Activated B cell treated with CpG ODN at 0.5 μM for 24 hours (primary cell): ENCODE measurements at regions of chr2 and their contacts with region 1.

Region 1: DNA sequence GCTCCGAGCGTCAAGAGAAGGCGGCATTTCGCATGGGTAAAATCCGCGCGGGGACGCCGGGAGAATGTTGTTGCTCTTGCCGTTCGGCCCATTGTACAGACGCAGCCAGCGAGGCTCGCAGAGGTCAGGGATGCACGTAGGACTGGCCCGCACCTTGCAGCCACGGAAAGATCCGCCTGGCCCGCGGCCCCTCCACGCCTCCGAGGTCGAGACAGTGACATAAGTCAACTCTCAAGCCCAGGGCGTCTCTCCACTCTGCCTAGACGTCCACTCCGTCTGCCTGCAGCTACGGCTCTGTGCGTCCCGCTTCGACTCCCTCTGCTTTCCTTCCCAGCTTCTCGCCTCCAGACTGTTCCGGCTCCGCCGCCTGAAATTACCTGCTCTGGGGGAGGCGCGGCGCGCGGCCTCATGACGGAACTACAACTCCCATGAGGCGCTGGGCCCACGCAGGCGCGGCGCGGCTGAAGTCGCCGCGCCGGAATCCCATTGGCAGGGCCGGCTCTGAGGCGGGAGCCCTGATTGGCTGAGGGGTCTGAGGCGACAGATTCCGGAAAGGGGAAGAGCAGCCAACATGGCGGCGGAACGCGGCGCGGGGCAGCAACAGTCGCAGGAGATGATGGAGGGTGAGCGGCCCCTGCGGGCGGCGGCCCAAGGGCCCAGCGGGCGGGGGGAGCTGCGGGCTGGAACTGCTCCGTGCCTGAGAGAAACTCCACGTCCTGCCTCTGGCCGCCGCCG is at the start of gene PPP1R7:
- DNase-seq: peak; percentile 84
- ATAC-seq: peak; percentile 83
- H3K4me3 Mint-ChIP-seq: peak within 1 kb of the TSS; percentile 100
- H3K27ac Mint-ChIP-seq: peak within 1 kb of the TSS; percentile 95
- H3K4me1 Mint-ChIP-seq: peaks cover 26% of the 10 kb centered on the region
- H3K27me3 Mint-ChIP-seq: no peaks in the 10 kb centered on the region
- CTCF ChIP-seq: no peak
- total RNA-seq, gene PPP1R7: 72.0 and 74.5 TPM in 2 replicates

Region 2: DNA sequence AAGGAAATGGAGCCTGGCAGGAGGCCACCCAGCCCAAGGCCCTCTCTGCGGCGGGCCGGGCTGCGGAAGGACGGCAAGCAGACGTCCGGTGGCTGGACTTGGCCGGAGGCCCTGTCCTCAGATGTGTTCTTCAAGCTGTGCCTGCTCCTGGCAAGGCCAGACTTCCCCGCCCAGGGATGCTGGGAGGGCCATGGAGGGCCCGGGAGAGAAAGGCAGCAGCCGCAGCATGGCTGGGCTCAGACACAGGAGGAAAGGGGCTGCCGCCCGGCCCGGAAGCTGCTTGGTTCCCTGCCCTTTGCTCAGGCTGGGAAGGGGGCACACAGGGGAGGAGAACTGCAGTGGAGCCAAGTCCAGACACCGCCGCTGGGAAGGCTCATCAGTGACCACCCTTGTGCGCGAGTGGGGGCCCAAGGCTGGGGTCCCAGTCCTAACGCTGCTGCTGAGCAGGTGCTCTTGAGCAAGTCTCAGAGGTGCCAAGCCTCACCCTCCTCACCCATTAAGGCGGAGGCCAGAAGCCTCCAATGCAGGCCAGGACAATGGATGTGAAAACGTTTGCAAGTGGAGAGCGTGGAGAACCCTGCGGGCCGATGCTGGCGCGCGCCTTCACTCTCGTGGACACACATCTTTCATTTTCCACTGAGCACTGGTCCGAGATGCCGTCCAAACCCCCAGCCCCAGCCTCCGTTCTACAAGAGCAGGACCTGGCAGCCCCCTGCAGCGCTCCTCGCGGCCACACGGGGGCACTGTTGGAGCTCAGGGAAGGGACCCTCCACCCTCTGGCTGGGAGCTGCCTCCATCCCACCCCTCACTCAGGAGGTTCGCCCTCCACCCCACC is 236.1 kb before region 1 on chr2:
- CTCF ChIA-PET with region 1: interaction called, 5 read pairs
- POLR2A ChIA-PET with region 1: interaction called, 3 read pairs
- intact Hi-C with region 1: loop called (anchors 1 kb)
- DNase-seq: peak; percentile 66
- ATAC-seq: peak; percentile 71
- H3K4me3 Mint-ChIP-seq: no peak overlapping the region
- H3K27ac Mint-ChIP-seq: no peak overlapping the region
- H3K4me1 Mint-ChIP-seq: peaks cover 11% of the 10 kb centered on the region
- H3K27me3 Mint-ChIP-seq: peaks cover 24% of the 10 kb centered on the region
- CTCF ChIP-seq: peak; percentile 15

Region 3: DNA sequence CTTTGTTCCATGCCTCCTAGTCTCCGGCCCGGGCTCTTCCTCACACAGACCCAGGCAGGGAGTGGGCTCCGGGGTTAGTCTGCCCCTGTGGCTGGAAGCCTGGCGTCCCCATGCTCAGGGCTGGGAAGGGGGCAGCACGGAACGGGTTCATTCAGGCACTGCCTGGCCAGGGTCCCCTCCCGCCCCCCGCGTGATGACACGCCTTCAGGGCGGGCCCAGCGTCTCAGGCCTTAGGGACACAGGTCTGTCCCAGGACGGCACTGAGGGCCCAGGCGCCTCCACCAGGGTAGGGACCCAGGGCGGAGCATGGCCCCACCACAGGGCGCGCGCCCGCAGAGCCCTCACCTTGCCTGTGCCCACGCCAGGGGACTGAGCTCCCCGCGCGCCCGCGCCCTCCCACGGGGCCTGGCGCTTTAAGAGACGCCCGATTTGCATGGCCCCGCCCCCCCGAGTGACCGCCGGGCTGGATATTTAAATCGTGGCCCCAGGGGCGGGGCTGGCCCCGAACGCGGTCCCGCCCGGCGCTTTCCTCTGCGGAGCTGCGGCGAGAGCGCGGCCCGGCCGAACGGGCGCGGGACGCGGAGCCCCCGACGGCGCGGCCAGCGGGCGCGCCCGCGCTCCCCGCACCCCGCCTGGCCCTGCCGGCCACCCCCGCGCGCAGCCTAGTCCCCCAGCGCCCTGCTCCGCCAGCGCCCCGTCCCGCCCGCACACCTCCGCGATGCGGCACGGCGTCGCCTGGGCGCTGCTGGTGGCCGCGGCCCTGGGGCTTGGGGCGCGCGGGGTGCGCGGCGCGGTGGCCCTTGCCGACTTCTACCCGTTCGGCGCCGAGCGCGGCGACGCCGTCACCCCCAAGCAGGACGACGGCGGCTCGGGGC is 151.7 kb before region 1 on chr2 and contains the start of gene SNED1:
- CTCF ChIA-PET with region 1: no interaction called
- POLR2A ChIA-PET with region 1: no interaction called
- intact Hi-C with region 1: loop called (anchors 5 kb)
- DNase-seq: peak; percentile 67
- ATAC-seq: peak; percentile 89
- H3K4me3 Mint-ChIP-seq: peak within 1 kb of the TSS; percentile 2
- H3K27ac Mint-ChIP-seq: no peak within 1 kb of the TSS
- H3K4me1 Mint-ChIP-seq: no peaks in the 10 kb centered on the region
- H3K27me3 Mint-ChIP-seq: peaks cover 23% of the 10 kb centered on the region
- CTCF ChIP-seq: no peak
- total RNA-seq, gene SNED1: 44.7 and 59.8 TPM in 2 replicates

Region 4: GRCh38 chr2:241102239-241102803 is 47.8 kb before region 1 on chr2 and contains the start of gene MTERF4:
- CTCF ChIA-PET with region 1: interaction called, 7 read pairs
- POLR2A ChIA-PET with region 1: interaction called, 137 read pairs
- intact Hi-C with region 1: loop called (anchors 1 kb)
- DNase-seq: peak; percentile 85
- ATAC-seq: peak; percentile 92
- H3K4me3 Mint-ChIP-seq: peak within 1 kb of the TSS; percentile 97
- H3K27ac Mint-ChIP-seq: peak within 1 kb of the TSS; percentile 98
- H3K4me1 Mint-ChIP-seq: peaks cover 55% of the 10 kb centered on the region
- H3K27me3 Mint-ChIP-seq: no peaks in the 10 kb centered on the region
- CTCF ChIP-seq: no peak
- total RNA-seq, gene MTERF4: 99.7 and 122 TPM in 2 replicates

Region 5: GRCh38 chr2:241123816-241124536 is 26.1 kb before region 1 on chr2:
- CTCF ChIA-PET with region 1: no interaction called
- POLR2A ChIA-PET with region 1: interaction called, 27 read pairs
- intact Hi-C with region 1: loop called (anchors 1 kb)
- DNase-seq: no peak
- ATAC-seq: no peak
- H3K4me3 Mint-ChIP-seq: no peak overlapping the region
- H3K27ac Mint-ChIP-seq: peak overlapping the region; percentile 69
- H3K4me1 Mint-ChIP-seq: peaks cover 46% of the 10 kb centered on the region
- H3K27me3 Mint-ChIP-seq: no peaks in the 10 kb centered on the region
- CTCF ChIP-seq: no peak

Region 6: GRCh38 chr2:241609859-241610793 is 460.0 kb after region 1 on chr2:
- CTCF ChIA-PET with region 1: no interaction called
- POLR2A ChIA-PET with region 1: no interaction called
- intact Hi-C with region 1: loop called (anchors 10 kb)
- DNase-seq: peak; percentile 92
- ATAC-seq: peak; percentile 99
- H3K4me3 Mint-ChIP-seq: peak overlapping the region; percentile 66
- H3K27ac Mint-ChIP-seq: peak overlapping the region; percentile 53
- H3K4me1 Mint-ChIP-seq: peaks cover 15% of the 10 kb centered on the region
- H3K27me3 Mint-ChIP-seq: no peaks in the 10 kb centered on the region
- CTCF ChIP-seq: no peak